ENCODE measurements at regions of chr11 and their contacts with region 1.

Region 1: GRCh38 chr11:7986768-7987559 is at the start of gene EIF3F:
- DNase-seq: peak; percentile 86 to 91
- ATAC-seq: peak; percentile 99
- total RNA-seq, gene EIF3F: 198 to 218 TPM

Region 2: DNA sequence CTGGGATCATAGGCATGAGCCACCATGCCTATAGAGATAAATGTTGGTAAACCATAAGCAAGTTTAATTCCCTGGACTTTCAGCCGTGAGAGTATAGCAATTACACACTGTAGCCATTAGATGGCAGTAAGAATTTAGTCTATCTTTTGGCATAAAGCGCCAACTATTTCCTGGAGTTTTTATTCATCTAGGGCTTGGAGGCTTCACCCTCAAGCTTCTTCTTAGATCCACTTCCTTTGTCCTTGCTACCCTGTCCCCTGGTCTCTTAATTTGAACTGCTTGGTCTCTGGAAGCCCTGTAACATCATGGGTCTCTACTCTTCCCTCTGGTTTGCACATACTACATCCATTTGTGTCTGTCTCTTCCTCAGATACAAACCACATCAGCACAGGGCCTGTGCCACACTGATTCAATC is 94.1 kb before region 1 on chr11:
- intact Hi-C with region 1: loop called in 1 of 2 experiments (anchors 2 kb)
- DNase-seq: no peak
- ATAC-seq: peak; percentile 66

Measured in left colon (tissue), 2 donors.